HepG2 (cell line): ENCODE measurements at regions of chr2 and their contacts with region 1.

Region 1: DNA sequence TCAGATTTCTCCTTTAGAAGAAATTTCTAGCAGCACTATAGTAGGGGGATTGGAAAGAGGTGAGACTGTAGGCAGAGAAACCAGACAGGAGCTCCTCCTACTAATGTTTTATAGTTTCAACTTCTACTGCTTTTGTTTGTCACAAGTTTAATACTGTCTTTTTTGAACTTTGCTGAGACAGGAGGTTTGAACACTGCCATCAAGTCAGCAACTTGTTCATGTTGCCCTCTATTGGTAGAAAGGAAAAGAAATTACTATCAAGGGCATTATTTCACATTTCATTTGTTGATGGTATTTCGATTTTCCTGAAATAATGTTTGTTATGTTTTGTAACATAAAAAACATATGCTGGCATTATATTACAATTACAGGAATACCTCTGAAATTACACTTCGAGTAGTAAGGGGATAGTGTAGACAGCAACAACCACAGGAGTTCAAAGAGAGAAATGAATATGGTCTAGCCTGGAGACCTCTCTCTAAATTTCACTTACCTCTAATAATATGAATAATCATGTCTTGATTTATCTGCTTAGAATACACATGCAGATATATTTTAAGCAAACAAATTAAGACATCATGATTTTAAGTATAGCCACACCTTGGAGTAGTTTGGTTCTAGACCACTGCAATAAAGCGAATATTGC is 12.4 kb upstream of the CCDC88A start:
- DNase-seq: peak; percentile 32
- ATAC-seq: peak; percentile 58
- H3K4me3 ChIP-seq: no peak overlapping the region
- H3K27ac ChIP-seq: no peak overlapping the region
- H3K4me1 ChIP-seq: peaks cover 25% of the 10 kb centered on the region
- H3K27me3 ChIP-seq: no peaks in the 10 kb centered on the region
- CTCF ChIP-seq: peak; percentile 69
- EP300 ChIP-seq: no peak
- POLR2A ChIP-seq: no peak
- RAD21 ChIP-seq: peak; percentile 29; the same call in 1 of the 2 replicates

Region 2: DNA sequence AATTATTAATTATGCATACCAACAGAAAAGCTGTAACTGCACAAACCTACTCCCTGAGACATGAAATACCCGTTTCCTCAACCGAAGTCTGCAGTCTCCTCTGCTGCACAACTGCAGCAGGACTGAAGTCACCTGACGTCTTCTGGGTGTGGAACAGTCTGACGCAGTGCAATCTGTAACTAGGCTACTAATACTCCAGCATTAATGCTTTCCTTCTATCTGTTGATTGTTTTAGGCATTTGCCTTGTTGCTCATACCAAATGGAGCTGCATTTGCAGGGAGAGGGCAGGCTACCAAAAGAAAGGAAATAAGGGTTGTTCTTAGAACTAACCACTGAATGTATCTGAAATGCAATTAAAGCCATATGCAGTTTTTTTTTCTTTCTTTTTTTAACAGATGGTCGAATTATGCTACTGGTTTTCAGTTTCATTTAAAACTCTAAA is 421.9 kb before region 1 on chr2:
- CTCF ChIA-PET with region 1: no interaction called
- POLR2A ChIA-PET with region 1: no interaction called
- in situ Hi-C with region 1: no loop called
- intact Hi-C with region 1: loop called (anchors 10 kb)
- DNase-seq: no peak
- ATAC-seq: no peak
- H3K4me3 ChIP-seq: no peak overlapping the region
- H3K27ac ChIP-seq: no peak overlapping the region
- H3K4me1 ChIP-seq: peaks cover 57% of the 10 kb centered on the region
- H3K27me3 ChIP-seq: no peaks in the 10 kb centered on the region
- CTCF ChIP-seq: no peak
- EP300 ChIP-seq: no peak
- POLR2A ChIP-seq: no peak
- RAD21 ChIP-seq: no peak

Region 3: GRCh38 chr2:55311444-55311870 is 120.6 kb before region 1 on chr2:
- CTCF ChIA-PET with region 1: no interaction called
- POLR2A ChIA-PET with region 1: no interaction called
- in situ Hi-C with region 1: no loop called
- intact Hi-C with region 1: loop called (anchors 10 kb)
- DNase-seq: no peak
- ATAC-seq: peak; percentile 81
- H3K4me3 ChIP-seq: no peak overlapping the region
- H3K27ac ChIP-seq: no peak overlapping the region
- H3K4me1 ChIP-seq: no peaks in the 10 kb centered on the region
- H3K27me3 ChIP-seq: no peaks in the 10 kb centered on the region
- CTCF ChIP-seq: no peak
- EP300 ChIP-seq: no peak
- POLR2A ChIP-seq: no peak
- RAD21 ChIP-seq: no peak